ENCODE measurements at regions of chr11 and their contacts with region 1.

Region 1: GRCh38 chr11:57249384-57250319 is 12.6 kb upstream of the APLNR start:
- DNase-seq: peak; percentile 31 to 68
- ATAC-seq: peak; percentile 70 to 81
- H3K4me3 ChIP-seq: no peak overlapping the region
- H3K27ac ChIP-seq: peak overlapping the region; percentile 89 to 90
- H3K4me1 ChIP-seq: peaks cover 11% of the 10 kb centered on the region
- CTCF ChIP-seq: peak; percentile 97
- EP300 ChIP-seq: no peak
- POLR2A ChIP-seq: no peak
- RAD21 ChIP-seq: peak; percentile 93 to 95

Region 2: DNA sequence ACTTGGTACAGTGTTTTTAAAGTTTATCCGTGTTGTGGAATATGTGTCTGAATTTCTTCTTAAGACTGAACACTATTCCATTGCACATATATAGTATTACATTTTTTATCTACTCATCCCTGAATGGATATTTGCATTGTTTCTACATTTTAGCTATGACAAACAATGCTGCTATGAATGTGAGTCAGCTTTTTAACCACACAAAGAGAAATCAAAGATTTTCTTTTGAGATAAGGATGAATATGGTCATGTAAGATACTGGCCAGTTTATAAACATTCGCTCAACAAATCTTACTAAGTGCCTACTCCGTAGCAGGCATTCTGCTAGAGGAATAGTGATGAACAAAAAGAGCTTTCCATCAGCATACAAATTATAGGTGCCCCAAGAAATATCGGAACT is 484.7 kb before region 1 on chr11:
- CTCF ChIA-PET with region 1: interaction called, 10 read pairs
- POLR2A ChIA-PET with region 1: no interaction called
- DNase-seq: no peak
- ATAC-seq: peak; percentile 24 to 34; a peak in 1 of 6 replicates
- H3K4me3 ChIP-seq: no peak overlapping the region
- H3K27ac ChIP-seq: no peak overlapping the region
- H3K4me1 ChIP-seq: peaks cover 6% of the 10 kb centered on the region; the same call in 2 of the 3 replicates
- CTCF ChIP-seq: no peak
- EP300 ChIP-seq: no peak
- POLR2A ChIP-seq: no peak
- RAD21 ChIP-seq: no peak

Region 3: GRCh38 chr11:56855217-56855616 is 394.4 kb before region 1 on chr11:
- CTCF ChIA-PET with region 1: interaction called, 596 read pairs
- POLR2A ChIA-PET with region 1: no interaction called
- DNase-seq: no peak
- ATAC-seq: no peak
- H3K4me3 ChIP-seq: no peak overlapping the region
- H3K27ac ChIP-seq: peak overlapping the region; percentile 34 to 46; a peak in 4 of 6 replicates
- H3K4me1 ChIP-seq: peaks cover 22% of the 10 kb centered on the region
- CTCF ChIP-seq: no peak
- EP300 ChIP-seq: no peak
- POLR2A ChIP-seq: no peak
- RAD21 ChIP-seq: no peak

Region 4: DNA sequence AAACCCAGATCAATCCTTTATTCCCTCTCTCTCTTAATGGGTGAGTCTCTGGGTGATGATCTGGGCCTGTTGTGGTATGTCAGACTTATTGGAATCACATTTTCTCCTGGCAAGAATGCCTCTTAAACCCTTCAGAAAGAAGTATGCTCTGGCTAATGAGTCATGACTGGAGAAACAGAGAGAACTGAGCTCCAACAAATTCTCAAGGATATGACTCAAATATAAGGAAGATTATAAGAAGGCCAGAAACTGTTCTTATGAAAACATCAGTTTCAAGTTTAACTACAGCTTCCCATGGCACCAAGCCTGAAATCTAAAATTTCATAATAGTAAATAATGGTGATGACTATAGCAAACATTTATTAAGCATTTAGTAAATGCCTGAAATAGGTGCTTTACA is 177.0 kb before region 1 on chr11:
- CTCF ChIA-PET with region 1: interaction called, 11 read pairs
- POLR2A ChIA-PET with region 1: no interaction called
- DNase-seq: peak; percentile 78 to 93
- ATAC-seq: peak; percentile 95 to 97
- H3K4me3 ChIP-seq: no peak overlapping the region
- H3K27ac ChIP-seq: peak overlapping the region; percentile 90 to 91
- H3K4me1 ChIP-seq: peaks cover 30% of the 10 kb centered on the region
- CTCF ChIP-seq: no peak
- EP300 ChIP-seq: peak; percentile 84 to 91
- POLR2A ChIP-seq: no peak
- RAD21 ChIP-seq: peak; percentile 25 to 67; a peak in 4 of 5 replicates

Region 5: DNA sequence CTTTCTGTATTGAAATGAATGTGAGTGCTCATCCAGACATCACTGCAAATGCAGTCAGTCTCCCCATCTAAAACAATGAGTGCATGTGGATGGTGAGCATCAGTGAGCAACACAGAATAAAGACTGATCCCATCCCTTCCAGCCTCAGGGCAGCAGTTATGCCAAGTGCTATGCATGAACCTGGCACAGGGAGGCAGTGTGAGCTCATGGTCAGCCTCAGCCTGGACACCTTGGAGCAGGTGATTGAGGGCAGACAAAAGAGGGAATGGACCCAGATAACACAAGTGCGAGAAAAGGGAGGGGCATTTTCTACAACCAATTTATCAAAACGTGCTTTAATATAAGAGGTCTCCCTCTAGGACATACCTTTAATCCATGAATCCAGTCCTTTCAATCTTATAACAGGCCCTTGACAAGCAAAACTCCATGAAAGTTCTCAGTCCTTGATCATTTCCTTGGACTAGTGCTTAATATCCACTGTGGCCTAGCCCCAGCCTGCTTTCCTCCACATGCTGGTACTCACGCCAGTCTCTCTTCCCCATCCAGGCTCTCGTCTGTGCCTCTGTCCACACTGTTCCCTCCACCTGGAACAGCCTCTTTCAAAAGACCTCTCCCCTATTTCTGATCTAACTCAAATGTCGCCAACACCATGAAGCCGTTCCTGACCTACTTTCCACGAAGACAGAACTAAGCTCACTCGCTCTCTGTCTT is 118.4 kb before region 1 on chr11:
- CTCF ChIA-PET with region 1: interaction called, 44 read pairs
- POLR2A ChIA-PET with region 1: no interaction called
- DNase-seq: peak in 1 of 2 experiments; percentile 45
- ATAC-seq: peak; percentile 64 to 91; a peak in 4 of 6 replicates
- H3K4me3 ChIP-seq: no peak overlapping the region
- H3K27ac ChIP-seq: peak overlapping the region in 1 of 2 experiments; percentile 37; a peak in 2 of 6 replicates
- H3K4me1 ChIP-seq: peaks cover 11% of the 10 kb centered on the region
- CTCF ChIP-seq: peak; percentile 39
- EP300 ChIP-seq: no peak
- POLR2A ChIP-seq: no peak
- RAD21 ChIP-seq: peak; percentile 57 to 72

Region 6: DNA sequence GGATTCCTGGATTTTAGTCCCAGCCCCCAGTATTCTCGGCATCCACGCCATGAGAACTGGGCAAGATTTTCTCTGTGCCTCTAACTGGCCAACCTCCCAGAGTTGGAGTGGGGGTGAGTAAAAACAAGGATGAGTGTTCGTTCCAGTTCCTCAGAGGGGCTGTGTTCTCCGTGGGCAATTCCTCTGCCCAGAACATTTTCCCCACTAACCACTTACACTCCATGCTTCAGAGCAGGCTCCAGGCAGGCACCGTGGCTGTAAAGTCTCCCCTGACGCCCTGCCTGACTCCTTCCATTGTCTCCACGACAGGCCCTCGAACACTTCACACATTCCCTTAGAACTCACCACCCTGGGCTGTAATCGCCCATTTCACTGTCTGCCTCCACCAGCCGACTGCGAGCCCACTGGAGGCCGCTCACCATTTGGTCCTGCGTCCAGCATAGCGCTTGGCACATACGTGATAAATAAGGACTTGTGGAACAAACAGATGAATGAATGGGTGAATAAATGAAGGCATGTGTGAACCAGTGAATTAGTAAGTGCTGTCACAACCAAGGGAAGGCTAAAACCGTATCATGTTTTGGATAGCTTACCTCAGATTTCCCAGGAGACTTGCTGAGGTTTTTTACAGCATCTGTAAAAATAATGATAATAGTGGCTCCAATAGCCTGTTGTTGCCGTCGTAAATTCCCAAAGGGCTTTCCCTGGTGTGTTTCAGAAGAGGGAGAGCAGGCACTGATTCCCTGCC is 18.7 kb before region 1 on chr11:
- CTCF ChIA-PET with region 1: interaction called, 13 read pairs
- POLR2A ChIA-PET with region 1: no interaction called
- DNase-seq: no peak
- ATAC-seq: no peak
- H3K4me3 ChIP-seq: no peak overlapping the region
- H3K27ac ChIP-seq: peak overlapping the region in 1 of 2 experiments; percentile 21; a peak in 1 of 6 replicates
- H3K4me1 ChIP-seq: no peaks in the 10 kb centered on the region
- CTCF ChIP-seq: no peak
- EP300 ChIP-seq: no peak
- POLR2A ChIP-seq: no peak
- RAD21 ChIP-seq: no peak

Region 7: GRCh38 chr11:57277845-57278709 is 28.4 kb after region 1 on chr11:
- CTCF ChIA-PET with region 1: interaction called, 90 read pairs
- POLR2A ChIA-PET with region 1: interaction called, 3 read pairs
- DNase-seq: peak; percentile 81 to 89
- ATAC-seq: peak; percentile 96 to 98
- H3K4me3 ChIP-seq: no peak overlapping the region
- H3K27ac ChIP-seq: peak overlapping the region; percentile 85 to 89
- H3K4me1 ChIP-seq: peaks cover 22% of the 10 kb centered on the region
- CTCF ChIP-seq: peak; percentile 81
- EP300 ChIP-seq: no peak
- POLR2A ChIP-seq: no peak
- RAD21 ChIP-seq: peak; percentile 71 to 81

Region 8: DNA sequence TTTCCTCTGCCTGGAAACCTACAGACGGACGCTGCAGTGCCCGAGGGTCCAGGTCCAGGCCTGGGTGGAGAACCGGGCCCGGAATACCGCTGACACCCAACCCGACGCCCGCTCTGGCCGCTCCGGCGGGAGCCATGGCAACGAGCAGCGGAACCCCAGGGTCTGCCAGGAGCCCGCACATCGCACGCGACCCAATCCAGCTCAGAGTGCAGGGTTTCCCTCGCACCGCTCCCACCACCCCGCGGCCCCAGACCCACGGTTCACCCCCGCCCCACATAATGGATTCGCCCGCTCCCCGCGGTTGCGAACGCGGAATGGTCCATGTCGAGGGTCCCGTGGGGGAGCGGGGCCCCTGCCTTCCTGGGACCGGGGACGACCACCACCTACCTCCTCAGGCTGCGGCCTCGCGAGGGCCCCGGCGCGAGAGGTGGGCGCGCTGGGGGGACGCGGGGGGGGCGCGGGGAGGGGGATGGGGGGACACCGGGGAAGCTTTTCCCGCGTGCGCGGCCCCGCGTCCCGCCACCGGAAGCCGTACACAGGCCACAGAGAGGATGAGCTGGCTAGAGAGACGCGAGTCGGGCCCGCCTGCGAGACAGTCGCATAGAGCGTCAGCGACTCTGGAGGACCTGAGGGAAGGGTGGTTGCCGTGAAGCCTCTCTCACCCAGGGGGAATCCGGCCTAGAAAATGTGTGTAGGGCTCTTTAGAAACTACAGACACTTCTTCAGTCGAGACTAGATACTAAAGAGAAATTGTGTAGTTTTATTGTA is 85.9 kb after region 1 on chr11 and contains the start of gene SSRP1:
- CTCF ChIA-PET with region 1: no interaction called
- POLR2A ChIA-PET with region 1: no interaction called
- DNase-seq: peak; percentile 91 to 92
- ATAC-seq: peak; percentile 94 to 99
- H3K4me3 ChIP-seq: peak within 1 kb of the TSS; percentile 81
- H3K27ac ChIP-seq: peak within 1 kb of the TSS; percentile 95 to 99
- H3K4me1 ChIP-seq: peaks cover 18% of the 10 kb centered on the region
- CTCF ChIP-seq: no peak; the same call in 2 of the 3 replicates
- EP300 ChIP-seq: no peak
- POLR2A ChIP-seq: peak; percentile 56
- RAD21 ChIP-seq: no peak
- polyA plus RNA-seq, gene SSRP1: 282 and 288 TPM in 2 replicates